Gastrocnemius medialis (tissue), 4 donors: ENCODE measurements at regions of chr3 and their contacts with region 1.

Region 1: GRCh38 chr3:156554842-156555687 is at the start of gene SSR3:
- DNase-seq: peak; percentile 99
- ATAC-seq: peak; percentile 98
- H3K4me3 ChIP-seq: peak within 1 kb of the TSS; percentile 84 to 100 (median 88)
- H3K27ac ChIP-seq: peak within 1 kb of the TSS; percentile 85 to 97 (median 90)
- H3K4me1 ChIP-seq: peaks cover 22 to 27% of the 10 kb centered on the region in 2 donors
- H3K27me3 ChIP-seq: no peaks in the 10 kb centered on the region
- CTCF ChIP-seq: peak; percentile 34 to 65 (median 63)
- POLR2A ChIP-seq: peak; percentile 71 to 78
- total RNA-seq, gene SSR3: 50.9 to 91.5 (median 65.3) TPM

Region 2: DNA sequence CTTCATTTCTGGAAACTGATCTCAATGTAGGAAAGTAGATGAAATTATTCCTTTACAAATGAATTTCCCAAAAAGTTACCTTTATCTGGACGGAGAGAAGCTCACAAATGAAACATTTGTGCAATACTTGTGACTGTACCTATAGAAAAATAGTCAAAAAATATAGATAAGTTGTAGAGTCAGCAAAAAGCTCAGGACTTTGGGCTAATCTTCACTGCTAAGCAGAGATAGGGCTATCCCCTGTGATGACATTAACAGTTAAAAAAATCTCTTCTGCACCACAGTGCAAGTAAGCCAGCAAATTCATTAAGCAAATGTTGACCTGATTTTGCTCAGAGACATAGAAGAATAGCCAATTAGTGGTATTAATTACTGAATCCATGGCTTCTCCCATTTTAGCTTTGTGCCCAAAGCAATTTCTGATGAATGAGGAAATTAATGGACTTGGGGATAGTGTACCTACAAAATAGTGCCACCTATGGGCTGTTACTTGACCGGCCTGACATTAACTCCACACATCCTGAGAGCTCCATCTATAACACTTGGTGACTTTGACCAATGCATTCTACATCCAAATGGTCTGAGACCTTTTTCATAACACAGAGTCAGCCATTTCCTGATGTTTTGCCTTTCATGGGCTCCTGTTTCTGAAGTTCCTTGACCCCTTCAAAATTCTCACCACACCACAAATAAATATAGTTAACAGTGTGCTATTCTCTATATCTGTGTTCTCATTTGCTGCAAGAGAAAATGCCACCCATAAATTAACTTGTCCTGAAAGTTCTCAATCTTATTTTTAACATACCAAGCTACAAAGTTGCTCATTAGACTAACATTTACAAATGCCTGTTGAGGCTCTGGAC is 105.1 kb before region 1 on chr3:
- in situ Hi-C with region 1: loop called in 1 of 4 experiments (anchors 25 kb)
- intact Hi-C with region 1: no loop called
- DNase-seq: no peak
- ATAC-seq: no peak
- H3K4me3 ChIP-seq: no peak overlapping the region
- H3K27ac ChIP-seq: no peak overlapping the region
- H3K4me1 ChIP-seq: no peaks in the 10 kb centered on the region
- H3K27me3 ChIP-seq: no peaks in the 10 kb centered on the region
- CTCF ChIP-seq: peak in 1 of 5 experiments; percentile 45
- POLR2A ChIP-seq: no peak

Region 3: GRCh38 chr3:156664831-156665178 is 109.7 kb after region 1 on chr3:
- in situ Hi-C with region 1: loop called in 2 of 4 experiments (anchors 10 kb)
- intact Hi-C with region 1: no loop called
- DNase-seq: no peak
- ATAC-seq: no peak
- H3K4me3 ChIP-seq: no peak overlapping the region
- H3K27ac ChIP-seq: no peak overlapping the region
- H3K4me1 ChIP-seq: peaks cover 0 to 5% of the 10 kb centered on the region in 2 donors
- H3K27me3 ChIP-seq: no peaks in the 10 kb centered on the region
- CTCF ChIP-seq: no peak
- POLR2A ChIP-seq: no peak

Region 4: GRCh38 chr3:157136647-157137387 is 581.8 kb after region 1 on chr3:
- in situ Hi-C with region 1: no loop called
- intact Hi-C with region 1: loop called (anchors 5 kb)
- DNase-seq: peak; percentile 57 to 72
- ATAC-seq: peak; percentile 49 to 50
- H3K4me3 ChIP-seq: no peak overlapping the region
- H3K27ac ChIP-seq: peak overlapping the region; percentile 76 to 86 (median 82)
- H3K4me1 ChIP-seq: peaks cover 58 to 59% of the 10 kb centered on the region in 2 donors
- H3K27me3 ChIP-seq: no peaks in the 10 kb centered on the region
- CTCF ChIP-seq: no peak
- POLR2A ChIP-seq: no peak